ENCODE measurements at regions of chr15 and their contacts with region 1.

Region 1: GRCh38 chr15:39580117-39580484 is 778 bp upstream of the THBS1 start:
- DNase-seq: peak; percentile 22
- ATAC-seq: peak; percentile 45
- H3K4me3 Mint-ChIP-seq: no peak overlapping the region
- H3K27ac Mint-ChIP-seq: no peak overlapping the region
- H3K4me1 Mint-ChIP-seq: peaks cover 8% of the 10 kb centered on the region
- H3K27me3 Mint-ChIP-seq: peaks cover 49% of the 10 kb centered on the region
- CTCF ChIP-seq: no peak

Region 2: GRCh38 chr15:38817427-38818156 is 762.5 kb before region 1 on chr15:
- CTCF ChIA-PET with region 1: no interaction called
- POLR2A ChIA-PET with region 1: no interaction called
- intact Hi-C with region 1: loop called (anchors 2 kb)
- DNase-seq: peak; percentile 56
- ATAC-seq: peak; percentile 65
- H3K4me3 Mint-ChIP-seq: no peak overlapping the region
- H3K27ac Mint-ChIP-seq: no peak overlapping the region
- H3K4me1 Mint-ChIP-seq: no peaks in the 10 kb centered on the region
- H3K27me3 Mint-ChIP-seq: peaks cover 7% of the 10 kb centered on the region
- CTCF ChIP-seq: peak; percentile 75